Sciatic nerve (tissue), 2 donors: ENCODE measurements at regions of chr15 and their contacts with region 1.

Region 1: GRCh38 chr15:34209421-34210282 is at the start of gene KATNBL1:
- DNase-seq: peak; percentile 99
- ATAC-seq: peak; percentile 99
- total RNA-seq, gene KATNBL1: 80.7 TPM

Region 2: DNA sequence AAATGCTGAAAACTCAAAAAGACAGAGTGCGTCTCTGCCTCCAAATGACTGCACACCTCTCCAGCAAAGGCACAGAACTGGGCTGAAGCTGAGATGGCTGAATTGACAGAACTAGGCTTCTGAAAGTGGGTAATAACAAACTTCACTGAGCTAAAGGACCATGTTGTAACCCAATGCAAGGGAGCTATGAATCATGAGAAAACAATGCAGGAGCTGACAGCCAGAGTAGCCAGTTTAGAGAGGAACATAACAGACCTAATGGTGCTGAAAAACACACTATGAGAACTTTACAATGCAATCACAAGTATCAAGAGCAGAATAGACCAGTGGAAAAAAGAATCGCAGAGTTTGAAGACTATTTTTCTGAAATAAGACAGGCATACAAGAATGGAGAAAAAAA is 160.5 kb before region 1 on chr15:
- intact Hi-C with region 1: loop called (anchors 10 kb)
- DNase-seq: no peak
- ATAC-seq: no peak

Region 3: GRCh38 chr15:34109797-34110663 is 99.6 kb before region 1 on chr15:
- intact Hi-C with region 1: loop called (anchors 5 kb)
- DNase-seq: no peak
- ATAC-seq: no peak

Region 4: DNA sequence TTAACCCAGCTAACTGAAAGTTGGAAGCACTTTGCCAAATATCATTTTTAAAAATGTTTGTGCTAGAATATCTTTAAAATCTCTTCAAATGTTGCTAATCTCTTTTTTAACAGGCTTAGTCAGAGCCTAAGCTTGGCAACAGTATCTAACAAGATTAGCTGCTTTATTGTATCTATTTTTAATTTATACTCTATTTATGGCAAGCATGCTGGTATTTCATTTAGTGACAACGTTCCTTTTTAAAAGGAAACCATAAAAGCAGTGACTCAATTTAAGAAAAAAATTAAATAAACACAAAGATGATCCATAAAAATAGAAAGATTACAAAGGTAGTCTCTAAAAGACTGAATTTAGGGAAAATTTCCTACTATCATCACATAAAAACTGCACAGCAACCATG is 87.4 kb after region 1 on chr15:
- intact Hi-C with region 1: no loop called
- DNase-seq: no peak
- ATAC-seq: no peak